ENCODE measurements at regions of chr1 and their contacts with region 1.

Region 1: GRCh38 chr1:35726450-35727433 is 8.1 kb upstream of the C1orf216 start:
- DNase-seq: peak; percentile 22
- H3K4me3 ChIP-seq: no peak overlapping the region
- H3K27ac ChIP-seq: no peak overlapping the region
- H3K4me1 ChIP-seq: no peaks in the 10 kb centered on the region
- H3K27me3 ChIP-seq: no peaks in the 10 kb centered on the region
- CTCF ChIP-seq: peak; percentile 87 to 89

Region 2: GRCh38 chr1:35180776-35181374 is 545.9 kb before region 1 on chr1:
- CTCF ChIA-PET with region 1: no interaction called
- dilution Hi-C with region 1: loop called (anchors 10 kb)
- in situ Hi-C with region 1: no loop called
- intact Hi-C with region 1: no loop called
- DNase-seq: no peak
- H3K4me3 ChIP-seq: no peak overlapping the region
- H3K27ac ChIP-seq: no peak overlapping the region
- H3K4me1 ChIP-seq: no peaks in the 10 kb centered on the region
- H3K27me3 ChIP-seq: no peaks in the 10 kb centered on the region
- CTCF ChIP-seq: no peak

Region 3: DNA sequence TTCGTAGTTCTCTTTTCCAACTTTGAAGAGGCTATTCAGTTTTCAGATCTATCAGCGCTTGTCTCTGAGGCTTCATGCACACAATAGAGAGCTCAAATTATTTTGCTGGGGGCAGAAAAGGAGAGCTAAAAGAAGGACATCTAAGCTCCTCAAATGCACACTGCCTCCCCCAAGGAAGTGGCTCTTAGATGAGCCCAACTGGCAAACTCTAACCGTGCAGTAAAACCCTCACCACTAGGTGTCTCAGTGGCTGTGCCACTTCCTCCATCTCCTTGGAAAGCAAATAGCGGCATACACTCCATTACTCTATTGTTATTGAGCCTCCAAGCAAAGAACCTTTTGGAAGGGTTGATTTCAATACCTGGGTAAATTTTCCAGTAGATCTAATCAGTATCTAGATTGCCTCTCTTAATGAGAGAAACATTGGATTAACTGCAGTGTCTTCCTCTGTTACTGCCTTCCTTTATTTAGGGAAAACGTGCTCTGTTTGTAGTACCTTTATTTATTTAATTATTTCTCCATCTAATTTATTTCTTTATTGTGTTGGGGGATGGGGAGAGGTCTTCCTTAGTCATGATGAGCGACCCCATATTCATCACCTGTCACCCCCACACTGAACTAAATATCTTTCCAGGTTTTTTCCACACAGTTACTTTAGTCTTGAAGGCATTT is 524.6 kb before region 1 on chr1:
- CTCF ChIA-PET with region 1: no interaction called
- dilution Hi-C with region 1: no loop called
- in situ Hi-C with region 1: no loop called
- intact Hi-C with region 1: loop called (anchors 5 kb)
- DNase-seq: peak; percentile 70
- H3K4me3 ChIP-seq: no peak overlapping the region
- H3K27ac ChIP-seq: no peak overlapping the region
- H3K4me1 ChIP-seq: no peaks in the 10 kb centered on the region
- H3K27me3 ChIP-seq: no peaks in the 10 kb centered on the region
- CTCF ChIP-seq: peak; percentile 86 to 93

Region 4: GRCh38 chr1:35573198-35574090 is 153.3 kb before region 1 on chr1 and contains the start of gene TFAP2E:
- CTCF ChIA-PET with region 1: interaction called, 4 read pairs
- dilution Hi-C with region 1: loop called (anchors 5 kb)
- in situ Hi-C with region 1: loop called in 1 of 2 experiments (anchors 5 kb)
- intact Hi-C with region 1: loop called (anchors 1 kb)
- DNase-seq: peak; percentile 41
- H3K4me3 ChIP-seq: peak within 1 kb of the TSS; percentile 56 to 68 (median 62)
- H3K27ac ChIP-seq: no peak within 1 kb of the TSS
- H3K4me1 ChIP-seq: peaks cover 21% of the 10 kb centered on the region
- H3K27me3 ChIP-seq: no peaks in the 10 kb centered on the region
- CTCF ChIP-seq: no peak
- total RNA-seq, gene TFAP2E: 0.17 to 0.71 TPM

Region 5: GRCh38 chr1:35834218-35834617 is 107.5 kb after region 1 on chr1:
- CTCF ChIA-PET with region 1: no interaction called
- dilution Hi-C with region 1: loop called (anchors 5 kb)
- in situ Hi-C with region 1: no loop called
- intact Hi-C with region 1: no loop called
- DNase-seq: no peak
- H3K4me3 ChIP-seq: no peak overlapping the region
- H3K27ac ChIP-seq: no peak overlapping the region
- H3K4me1 ChIP-seq: no peaks in the 10 kb centered on the region
- H3K27me3 ChIP-seq: no peaks in the 10 kb centered on the region
- CTCF ChIP-seq: no peak

Region 6: GRCh38 chr1:35882945-35883634 is 156.3 kb after region 1 on chr1 and contains the start of gene AGO1:
- CTCF ChIA-PET with region 1: no interaction called
- dilution Hi-C with region 1: no loop called
- in situ Hi-C with region 1: no loop called
- intact Hi-C with region 1: no loop called
- DNase-seq: peak; percentile 88
- H3K4me3 ChIP-seq: peak within 1 kb of the TSS; percentile 67 to 85 (median 73)
- H3K27ac ChIP-seq: peak within 1 kb of the TSS; percentile 17
- H3K4me1 ChIP-seq: peaks cover 6% of the 10 kb centered on the region
- H3K27me3 ChIP-seq: no peaks in the 10 kb centered on the region
- CTCF ChIP-seq: peak; percentile 87 to 88
- total RNA-seq, gene AGO1: 20.3 to 21.7 TPM

Measured in mammary epithelial cell (primary cell).